ENCODE measurements at regions of chr3 and their contacts with region 1.

Region 1: DNA sequence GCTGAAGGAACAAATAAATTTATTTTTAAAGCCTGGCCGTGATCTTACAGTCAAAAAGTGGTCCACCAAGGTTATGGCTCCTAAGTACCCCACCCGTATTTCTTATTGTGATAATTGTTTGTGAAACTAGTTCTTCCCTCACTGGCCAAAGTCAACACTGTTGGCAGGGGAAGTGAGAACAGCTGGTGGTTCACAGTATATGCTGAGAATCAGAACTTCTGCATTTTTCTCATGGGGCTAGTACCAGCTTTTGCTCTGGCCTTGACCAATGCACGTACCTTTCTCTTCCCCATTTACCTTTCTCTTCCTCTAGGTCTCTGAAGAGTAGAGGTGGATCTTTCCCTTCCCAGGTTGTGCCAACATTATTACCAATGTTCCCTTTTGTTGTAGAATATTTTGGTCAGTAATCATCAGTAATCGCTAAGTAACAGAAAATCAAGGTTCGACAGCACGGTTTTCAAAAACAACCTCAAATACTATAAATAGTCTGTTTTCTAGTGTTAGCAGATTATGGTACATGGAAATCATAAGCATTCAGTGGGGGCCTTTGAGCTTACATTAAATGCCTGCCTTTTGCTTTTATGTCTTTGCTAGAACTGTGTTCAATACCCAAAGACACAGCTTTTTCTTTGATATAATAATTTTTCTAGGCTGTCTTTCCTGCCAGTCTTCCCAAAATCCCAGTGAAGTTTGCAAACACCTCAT is 268.0 kb downstream of the LPP start:
- DNase-seq: no peak
- ATAC-seq: peak; percentile 95
- H3K4me3 Mint-ChIP-seq: peak overlapping the region; percentile 69
- H3K27ac Mint-ChIP-seq: peak overlapping the region; percentile 98
- H3K4me1 Mint-ChIP-seq: peaks cover 90% of the 10 kb centered on the region
- H3K27me3 Mint-ChIP-seq: no peaks in the 10 kb centered on the region
- CTCF ChIP-seq: no peak

Region 2: GRCh38 chr3:188389711-188390342 is 32.2 kb before region 1 on chr3:
- CTCF ChIA-PET with region 1: interaction called, 3 read pairs
- POLR2A ChIA-PET with region 1: interaction called, 10 read pairs
- intact Hi-C with region 1: loop called (anchors 1 kb)
- DNase-seq: peak; percentile 29
- ATAC-seq: peak; percentile 84
- H3K4me3 Mint-ChIP-seq: peak overlapping the region; percentile 65
- H3K27ac Mint-ChIP-seq: peak overlapping the region; percentile 98
- H3K4me1 Mint-ChIP-seq: peaks cover 87% of the 10 kb centered on the region
- H3K27me3 Mint-ChIP-seq: no peaks in the 10 kb centered on the region
- CTCF ChIP-seq: no peak

Region 3: DNA sequence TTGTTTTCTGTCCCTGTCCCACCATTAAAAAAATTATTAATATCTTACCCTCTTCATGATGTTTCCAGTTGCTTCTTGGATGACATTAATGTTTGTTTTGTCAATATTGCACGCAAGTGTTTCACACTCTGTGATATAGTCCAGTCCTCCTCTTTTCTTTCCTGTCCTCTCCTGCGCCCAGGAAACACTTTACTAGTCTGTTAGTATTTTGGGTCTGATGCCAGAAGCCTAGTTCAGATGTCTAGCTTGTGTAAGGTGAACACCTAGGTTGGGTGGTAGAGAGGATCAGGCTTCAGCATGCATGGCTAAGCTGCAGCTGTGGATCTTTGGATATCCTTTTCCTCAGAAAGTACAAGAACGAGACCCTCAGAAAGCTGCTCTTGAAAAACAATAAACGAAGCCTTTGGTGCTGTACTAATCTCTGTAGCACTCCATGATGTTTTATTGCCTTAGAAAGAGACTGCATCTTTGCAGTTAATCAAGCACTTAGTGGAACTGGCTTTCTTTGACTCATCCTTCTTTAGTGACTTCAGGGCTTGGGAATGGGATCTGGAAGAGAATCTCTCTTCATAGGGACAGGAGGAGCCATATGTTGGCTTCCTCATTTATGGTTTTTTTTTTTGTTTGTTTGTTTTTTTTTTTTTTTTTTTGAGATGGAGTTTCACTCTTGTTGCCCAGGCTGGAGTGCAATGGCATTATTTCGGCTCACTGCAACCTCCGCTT is 14.7 kb before region 1 on chr3:
- CTCF ChIA-PET with region 1: interaction called, 3 read pairs
- POLR2A ChIA-PET with region 1: interaction called, 79 read pairs
- intact Hi-C with region 1: loop called (anchors 1 kb)
- DNase-seq: no peak
- ATAC-seq: no peak
- H3K4me3 Mint-ChIP-seq: no peak overlapping the region
- H3K27ac Mint-ChIP-seq: no peak overlapping the region
- H3K4me1 Mint-ChIP-seq: peaks cover 49% of the 10 kb centered on the region
- H3K27me3 Mint-ChIP-seq: no peaks in the 10 kb centered on the region
- CTCF ChIP-seq: no peak

Region 4: DNA sequence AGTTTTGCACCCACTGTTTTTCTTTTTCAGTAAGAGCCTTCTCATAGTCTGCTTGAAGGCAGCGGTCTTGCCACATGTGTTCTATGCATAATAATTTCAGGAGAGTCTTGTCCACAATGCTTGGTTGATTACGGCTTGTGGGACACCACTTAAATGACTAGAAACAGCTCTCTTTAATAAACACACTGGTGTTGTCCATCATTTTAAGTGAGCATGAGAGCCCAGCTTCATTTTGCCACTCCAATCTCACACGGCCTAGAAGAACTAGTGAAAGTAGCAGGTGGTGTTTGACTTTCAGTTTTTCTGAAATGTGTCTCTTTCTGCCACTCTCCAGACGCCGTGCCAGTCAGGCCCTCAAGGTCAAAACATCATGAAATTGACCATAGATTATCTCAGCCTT is 24.0 kb after region 1 on chr3:
- CTCF ChIA-PET with region 1: interaction called, 3 read pairs
- POLR2A ChIA-PET with region 1: interaction called, 22 read pairs
- intact Hi-C with region 1: no loop called
- DNase-seq: no peak
- ATAC-seq: peak; percentile 59
- H3K4me3 Mint-ChIP-seq: peak overlapping the region; percentile 57
- H3K27ac Mint-ChIP-seq: peak overlapping the region; percentile 88
- H3K4me1 Mint-ChIP-seq: peaks cover 76% of the 10 kb centered on the region
- H3K27me3 Mint-ChIP-seq: no peaks in the 10 kb centered on the region
- CTCF ChIP-seq: no peak